A673 (cell line): ENCODE measurements at regions of chr9 and their contacts with region 1.

Region 1: GRCh38 chr9:74577956-74578355 is 80.8 kb downstream of the RORB start:
- DNase-seq: peak; percentile 22
- H3K4me3 ChIP-seq: no peak overlapping the region
- H3K27ac ChIP-seq: no peak overlapping the region
- H3K4me1 ChIP-seq: no peaks in the 10 kb centered on the region
- H3K27me3 ChIP-seq: peaks cover 23% of the 10 kb centered on the region
- CTCF ChIP-seq: peak; percentile 52

Region 2: DNA sequence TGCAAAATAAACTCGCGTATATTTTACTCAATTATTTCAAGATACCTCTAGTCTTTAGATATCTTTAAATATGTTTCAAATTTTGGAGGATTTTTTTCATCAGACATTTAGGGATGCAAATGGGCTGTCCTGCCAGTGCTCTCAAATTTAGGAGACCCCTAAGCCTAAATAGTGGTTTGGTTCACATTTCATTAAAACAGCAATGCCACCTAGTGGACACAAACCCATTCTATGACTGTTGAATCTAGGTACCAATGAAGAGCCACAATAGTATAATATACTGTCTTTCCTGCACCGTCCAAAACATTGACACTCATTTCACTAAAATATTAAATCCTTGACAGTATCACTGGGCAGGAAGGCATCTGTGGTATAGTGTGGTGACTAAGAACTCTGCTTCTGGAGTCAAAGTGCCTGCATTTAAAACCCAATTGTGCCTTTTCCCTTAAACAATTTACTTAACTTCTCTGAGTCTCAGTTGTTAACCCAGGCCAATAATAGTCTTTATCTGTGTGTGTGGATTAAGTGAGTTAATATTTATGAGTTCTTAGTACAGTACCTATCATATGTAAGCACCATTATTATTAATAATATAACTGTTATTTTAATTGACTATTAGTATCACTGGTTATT is 67.2 kb after region 1 on chr9:
- CTCF ChIA-PET with region 1: no interaction called
- POLR2A ChIA-PET with region 1: no interaction called
- intact Hi-C with region 1: loop called (anchors 5 kb)
- DNase-seq: peak; percentile 35
- H3K4me3 ChIP-seq: no peak overlapping the region
- H3K27ac ChIP-seq: no peak overlapping the region
- H3K4me1 ChIP-seq: no peaks in the 10 kb centered on the region
- H3K27me3 ChIP-seq: peaks cover 19% of the 10 kb centered on the region
- CTCF ChIP-seq: peak; percentile 67

Region 3: GRCh38 chr9:74742792-74743730 is 165.1 kb after region 1 on chr9:
- CTCF ChIA-PET with region 1: no interaction called
- POLR2A ChIA-PET with region 1: no interaction called
- intact Hi-C with region 1: loop called (anchors 5 kb)
- DNase-seq: peak; percentile 45
- H3K4me3 ChIP-seq: no peak overlapping the region
- H3K27ac ChIP-seq: no peak overlapping the region
- H3K4me1 ChIP-seq: no peaks in the 10 kb centered on the region
- H3K27me3 ChIP-seq: peaks cover 22% of the 10 kb centered on the region
- CTCF ChIP-seq: peak; percentile 75